ENCODE measurements at regions of chr6 and their contacts with region 1.

Region 1: GRCh38 chr6:69090132-69090531 is 455.1 kb downstream of the ADGRB3 start:
- DNase-seq: peak in 2 of 5 donors; percentile 23 to 26
- ATAC-seq: peak; percentile 86 to 98 (median 90)
- H3K4me3 ChIP-seq: no peak overlapping the region
- H3K27ac ChIP-seq: peak overlapping the region in 5 of 12 donors; percentile 6 to 61 (median 32)
- H3K4me1 ChIP-seq: peaks cover 0 to 12% (median 1%) of the 10 kb centered on the region in 12 donors
- H3K27me3 ChIP-seq: no peaks in the 10 kb centered on the region
- CTCF ChIP-seq: no peak
- POLR2A ChIP-seq: no peak

Region 2: GRCh38 chr6:68975064-68975463 is 115.1 kb before region 1 on chr6:
- intact Hi-C with region 1: no loop called
- DNase-seq: peak in 4 of 5 donors; percentile 25 to 54 (median 37)
- ATAC-seq: peak; percentile 84 to 93 (median 88)
- H3K4me3 ChIP-seq: no peak overlapping the region
- H3K27ac ChIP-seq: no peak overlapping the region
- H3K4me1 ChIP-seq: peaks cover 0 to 8% (median 0%) of the 10 kb centered on the region in 12 donors
- H3K27me3 ChIP-seq: no peaks in the 10 kb centered on the region
- CTCF ChIP-seq: peak; percentile 11 to 57 (median 44)
- POLR2A ChIP-seq: no peak

Region 3: DNA sequence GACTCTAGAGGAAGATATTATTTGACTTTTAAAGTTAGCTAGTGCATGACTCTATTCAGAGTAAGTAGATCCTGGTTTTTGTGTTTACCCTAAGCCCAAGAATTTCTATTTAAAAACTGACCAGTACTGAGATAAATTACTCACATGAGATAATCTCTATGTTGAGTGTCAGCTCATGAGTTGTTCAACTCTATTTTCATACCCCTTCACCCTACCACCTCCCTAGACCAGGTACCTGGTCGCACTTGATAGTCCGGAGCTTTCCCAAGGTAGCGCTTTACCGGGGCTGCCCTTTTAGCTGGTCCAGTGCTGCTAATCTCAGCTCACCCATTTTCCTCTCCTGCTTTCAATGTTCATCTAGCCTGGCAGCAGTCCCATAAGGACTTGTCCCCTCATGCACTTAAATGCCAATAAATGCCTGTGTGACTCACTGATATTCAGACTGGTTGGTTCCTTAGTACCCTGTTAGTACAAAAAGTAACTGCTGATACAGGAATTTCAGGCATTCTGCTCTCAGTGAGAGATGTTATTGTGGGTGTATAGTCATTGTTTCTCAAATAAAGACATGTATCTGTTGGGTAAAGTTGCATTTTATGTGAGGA is 48.9 kb after region 1 on chr6:
- intact Hi-C with region 1: loop called in 1 of 10 experiments (anchors 2 kb)
- DNase-seq: peak in 4 of 5 donors; percentile 20 to 64 (median 44)
- ATAC-seq: peak; percentile 86 to 90 (median 86)
- H3K4me3 ChIP-seq: peak overlapping the region in 7 of 12 donors; percentile 8 to 36 (median 23)
- H3K27ac ChIP-seq: peak overlapping the region; percentile 32 to 85 (median 73)
- H3K4me1 ChIP-seq: peaks cover 0 to 19% (median 2%) of the 10 kb centered on the region in 12 donors
- H3K27me3 ChIP-seq: no peaks in the 10 kb centered on the region
- CTCF ChIP-seq: no peak
- POLR2A ChIP-seq: no peak